Posterior cingulate gyrus (tissue), 11 donors: ENCODE measurements at regions of chr1 and their contacts with region 1.

Region 1: DNA sequence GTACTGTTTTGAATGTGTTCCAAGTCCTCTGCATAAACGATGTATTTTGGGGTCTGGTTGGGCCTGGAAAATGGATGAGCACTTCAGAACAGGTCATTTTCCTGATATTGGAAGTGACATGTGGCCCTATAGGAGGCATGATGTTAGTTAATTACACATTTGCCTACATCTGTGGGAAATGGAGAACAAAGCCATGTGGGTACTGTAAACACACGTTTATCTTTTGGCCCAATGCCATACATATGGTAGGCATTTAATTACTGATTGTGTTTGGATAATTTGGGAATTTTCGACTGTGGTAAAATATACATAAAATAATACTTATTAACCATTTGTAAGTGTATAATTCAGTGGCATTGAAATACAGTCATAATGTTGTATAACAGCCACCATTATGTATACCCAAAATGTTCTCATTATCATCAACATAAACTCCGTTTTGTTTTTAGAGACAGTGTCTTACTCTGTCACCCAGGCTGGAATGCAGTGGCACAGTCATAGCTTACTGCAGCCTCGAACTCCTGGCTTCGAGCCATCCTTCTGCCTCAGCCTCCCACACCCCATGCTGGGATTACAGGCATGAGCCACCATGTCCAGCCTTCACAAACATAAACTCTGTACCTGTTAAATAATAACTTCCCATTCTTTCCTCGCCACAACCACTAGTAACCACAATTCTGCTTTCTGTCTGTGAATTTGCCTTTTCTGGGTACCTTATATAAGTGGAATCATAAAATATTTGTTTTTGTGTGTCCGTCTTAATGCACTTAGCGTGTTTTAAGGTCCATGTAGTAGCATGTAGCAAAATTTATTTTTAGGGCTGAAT is 11.9 kb upstream of the RNPEP start:
- DNase-seq: peak in 3 of 10 donors; percentile 17 to 87 (median 34)

Region 2: GRCh38 chr1:201828820-201829774 is 141.4 kb before region 1 on chr1 and contains the start of gene IPO9:
- intact Hi-C with region 1: loop called (anchors 5 kb)
- DNase-seq: peak; percentile 83 to 98 (median 92)

Region 3: DNA sequence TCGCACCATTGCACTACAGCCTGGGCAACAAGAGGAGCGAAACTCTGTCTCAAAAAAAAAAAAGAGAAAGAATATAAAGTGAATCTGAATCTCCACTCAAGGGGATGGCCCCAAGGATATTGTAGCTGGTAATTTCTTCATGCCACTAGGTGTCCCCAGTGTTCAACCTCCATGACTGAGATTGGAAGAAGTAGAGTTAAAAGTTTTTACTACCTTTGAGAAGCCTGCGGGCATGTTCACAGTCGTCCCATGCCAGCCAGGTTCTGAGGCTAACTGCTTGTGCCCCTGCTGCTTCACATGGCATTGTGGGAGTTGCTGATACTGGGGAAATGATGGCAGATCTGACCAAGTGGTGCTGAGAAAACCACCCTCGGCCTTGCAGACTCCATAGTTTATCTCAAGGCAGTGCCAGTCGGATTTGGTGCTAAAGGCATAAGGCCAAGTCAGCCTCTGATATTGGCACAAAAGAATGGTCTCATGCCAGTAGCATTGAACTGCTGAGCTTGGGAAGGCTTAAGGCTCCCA is 92.6 kb before region 1 on chr1:
- intact Hi-C with region 1: loop called (anchors 1 kb)
- DNase-seq: peak in 3 of 10 donors; percentile 41 to 76 (median 43)

Region 4: GRCh38 chr1:201895913-201896807 is 74.4 kb before region 1 on chr1:
- intact Hi-C with region 1: loop called (anchors 5 kb)
- DNase-seq: peak; percentile 72 to 98 (median 87)

Region 5: DNA sequence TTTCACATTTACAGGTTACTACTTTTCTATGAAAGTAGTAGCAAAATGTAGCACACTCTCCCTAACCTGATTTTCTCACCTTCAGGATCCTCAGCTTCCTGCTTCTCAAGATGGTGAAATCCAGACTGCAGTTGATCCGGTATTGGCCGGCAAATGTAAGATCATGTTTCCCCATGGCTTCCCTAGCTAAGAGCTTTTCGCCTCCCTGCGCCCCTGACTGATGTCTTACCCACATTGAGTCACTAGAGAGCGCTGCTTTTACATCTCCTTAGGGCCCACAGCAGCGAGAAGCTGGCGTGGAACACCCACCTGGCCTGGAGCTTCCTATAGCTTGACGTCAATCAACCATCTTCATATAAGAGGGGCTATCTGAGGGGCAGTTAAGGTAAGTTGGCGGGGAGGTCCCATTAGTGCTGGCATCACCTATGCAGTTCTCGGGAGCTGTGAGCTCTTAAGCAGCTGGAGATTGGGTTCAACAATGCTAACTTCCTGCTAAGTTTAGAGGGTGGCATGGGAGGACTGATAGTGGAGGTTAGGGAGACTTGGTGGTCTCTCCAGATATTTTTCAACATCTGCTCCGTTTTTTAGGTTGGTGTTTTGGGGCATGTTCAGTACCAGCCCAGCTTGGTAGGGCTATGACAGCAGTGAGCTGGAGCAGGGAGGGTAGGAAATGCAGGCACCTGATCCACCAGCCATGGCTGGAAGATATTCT is 184.4 kb after region 1 on chr1:
- intact Hi-C with region 1: no loop called
- DNase-seq: peak in 3 of 10 donors; percentile 38 to 89 (median 52)